ENCODE measurements at regions of chr19 and their contacts with region 1.

Region 1: DNA sequence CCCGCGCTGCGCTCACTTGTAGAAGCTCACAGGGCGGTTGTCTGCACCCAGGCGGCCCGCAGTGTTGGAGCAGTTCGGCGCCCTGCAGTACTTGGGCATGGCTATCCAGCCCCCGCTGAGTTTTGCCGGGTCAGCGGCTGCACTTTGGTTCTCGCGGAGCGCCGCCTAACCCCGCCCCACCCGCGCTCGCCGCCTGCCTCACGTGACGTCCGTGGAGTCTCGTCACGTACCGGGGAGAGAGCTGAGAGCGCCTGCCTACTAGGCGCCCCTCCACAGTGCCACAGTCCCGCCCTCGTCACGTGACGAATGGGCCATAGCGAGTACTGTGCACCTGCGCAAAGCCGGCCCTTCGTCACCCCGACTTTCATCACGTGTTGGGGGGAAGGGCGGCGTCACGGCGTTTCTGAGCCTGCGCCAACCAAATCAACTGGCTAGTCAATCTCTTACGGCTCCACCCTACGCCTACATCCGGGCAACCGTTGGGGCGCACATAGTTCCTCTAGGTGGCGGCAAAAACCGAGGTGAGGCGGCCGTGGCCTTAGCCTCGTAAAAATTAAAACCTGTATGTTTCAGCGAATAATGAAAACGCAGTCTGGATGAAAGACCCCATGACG is at the start of gene THAP8:
- DNase-seq: peak; percentile 99 to 100 (median 100)
- ATAC-seq: peak; percentile 84
- H3K4me3 ChIP-seq: peak within 1 kb of the TSS; percentile 82
- H3K4me3 Mint-ChIP-seq: peak within 1 kb of the TSS; percentile 97
- H3K27ac ChIP-seq: peak within 1 kb of the TSS; percentile 92 to 96
- H3K27ac Mint-ChIP-seq: peak within 1 kb of the TSS; percentile 100
- H3K4me1 ChIP-seq: peaks cover 24% of the 10 kb centered on the region
- H3K4me1 Mint-ChIP-seq: peaks cover 37% of the 10 kb centered on the region
- H3K27me3 ChIP-seq: no peaks in the 10 kb centered on the region
- H3K27me3 Mint-ChIP-seq: no peaks in the 10 kb centered on the region
- CTCF ChIP-seq: peak; percentile 76
- total RNA-seq, gene THAP8: 0.38 to 0.53 TPM

Region 2: DNA sequence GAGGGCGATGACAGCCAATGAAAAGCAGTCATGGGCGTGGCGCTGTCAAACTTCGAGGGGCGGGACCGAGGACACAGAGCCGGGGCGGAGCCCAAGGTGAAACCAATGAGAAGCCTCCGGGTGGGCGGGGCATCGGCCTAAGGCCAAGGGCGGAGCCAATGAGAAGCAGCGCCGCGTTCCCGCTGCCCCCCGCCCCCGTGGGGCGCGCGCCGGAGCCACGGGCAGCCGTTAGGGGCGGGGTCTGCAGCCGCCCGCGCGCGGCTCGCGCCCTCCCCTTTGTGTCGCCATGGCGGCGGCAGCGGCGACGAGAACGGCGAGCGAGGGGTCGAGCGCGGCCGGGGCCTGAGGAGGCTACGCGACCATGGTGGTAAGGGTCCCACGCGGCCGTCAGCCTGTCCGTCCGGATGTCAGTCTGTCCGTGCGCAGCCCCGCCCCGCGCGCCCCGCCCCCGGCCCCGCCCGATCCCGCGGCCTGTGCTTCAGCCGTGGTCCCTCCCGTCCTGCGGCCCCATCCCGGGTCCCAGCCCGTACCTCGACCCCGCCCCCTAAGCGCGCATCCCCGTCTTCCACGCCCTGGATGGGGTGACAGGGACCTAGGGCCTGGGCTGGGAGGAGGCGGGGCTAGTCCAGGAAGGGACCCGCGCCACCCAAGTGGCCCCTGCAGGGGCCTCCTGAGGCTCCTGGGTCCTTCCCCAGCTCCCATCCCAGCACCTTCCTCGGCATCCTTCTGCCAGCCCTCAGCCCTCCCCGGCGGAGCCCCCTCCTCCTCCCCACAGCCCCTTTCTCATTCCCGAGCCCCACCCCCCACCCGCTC is 278.7 kb before region 1 on chr19 and contains the start of gene ARHGAP33:
- CTCF ChIA-PET with region 1: no interaction called
- POLR2A ChIA-PET with region 1: no interaction called
- intact Hi-C with region 1: loop called in 1 of 2 experiments (anchors 5 kb)
- DNase-seq: peak; percentile 96 to 100 (median 98)
- ATAC-seq: peak; percentile 98
- H3K4me3 ChIP-seq: peak within 1 kb of the TSS; percentile 69
- H3K4me3 Mint-ChIP-seq: peak within 1 kb of the TSS; percentile 90
- H3K27ac ChIP-seq: no peak within 1 kb of the TSS
- H3K27ac Mint-ChIP-seq: no peak within 1 kb of the TSS
- H3K4me1 ChIP-seq: peaks cover 21% of the 10 kb centered on the region
- H3K4me1 Mint-ChIP-seq: peaks cover 24% of the 10 kb centered on the region
- H3K27me3 ChIP-seq: no peaks in the 10 kb centered on the region
- H3K27me3 Mint-ChIP-seq: no peaks in the 10 kb centered on the region
- CTCF ChIP-seq: no peak
- total RNA-seq, gene ARHGAP33: 16.4 to 19.5 TPM

Region 3: GRCh38 chr19:35963514-35963913 is 90.7 kb before region 1 on chr19:
- CTCF ChIA-PET with region 1: interaction called, 3 read pairs
- POLR2A ChIA-PET with region 1: interaction called, 9 read pairs
- intact Hi-C with region 1: loop called (anchors 1 to 5 kb)
- DNase-seq: peak in 9 of 14 experiments; percentile 21 to 67 (median 33)
- ATAC-seq: no peak
- H3K4me3 ChIP-seq: no peak overlapping the region
- H3K4me3 Mint-ChIP-seq: no peak overlapping the region
- H3K27ac ChIP-seq: no peak overlapping the region
- H3K27ac Mint-ChIP-seq: no peak overlapping the region
- H3K4me1 ChIP-seq: peaks cover 27% of the 10 kb centered on the region
- H3K4me1 Mint-ChIP-seq: peaks cover 12% of the 10 kb centered on the region
- H3K27me3 ChIP-seq: no peaks in the 10 kb centered on the region
- H3K27me3 Mint-ChIP-seq: peaks cover 9% of the 10 kb centered on the region
- CTCF ChIP-seq: no peak

Region 4: DNA sequence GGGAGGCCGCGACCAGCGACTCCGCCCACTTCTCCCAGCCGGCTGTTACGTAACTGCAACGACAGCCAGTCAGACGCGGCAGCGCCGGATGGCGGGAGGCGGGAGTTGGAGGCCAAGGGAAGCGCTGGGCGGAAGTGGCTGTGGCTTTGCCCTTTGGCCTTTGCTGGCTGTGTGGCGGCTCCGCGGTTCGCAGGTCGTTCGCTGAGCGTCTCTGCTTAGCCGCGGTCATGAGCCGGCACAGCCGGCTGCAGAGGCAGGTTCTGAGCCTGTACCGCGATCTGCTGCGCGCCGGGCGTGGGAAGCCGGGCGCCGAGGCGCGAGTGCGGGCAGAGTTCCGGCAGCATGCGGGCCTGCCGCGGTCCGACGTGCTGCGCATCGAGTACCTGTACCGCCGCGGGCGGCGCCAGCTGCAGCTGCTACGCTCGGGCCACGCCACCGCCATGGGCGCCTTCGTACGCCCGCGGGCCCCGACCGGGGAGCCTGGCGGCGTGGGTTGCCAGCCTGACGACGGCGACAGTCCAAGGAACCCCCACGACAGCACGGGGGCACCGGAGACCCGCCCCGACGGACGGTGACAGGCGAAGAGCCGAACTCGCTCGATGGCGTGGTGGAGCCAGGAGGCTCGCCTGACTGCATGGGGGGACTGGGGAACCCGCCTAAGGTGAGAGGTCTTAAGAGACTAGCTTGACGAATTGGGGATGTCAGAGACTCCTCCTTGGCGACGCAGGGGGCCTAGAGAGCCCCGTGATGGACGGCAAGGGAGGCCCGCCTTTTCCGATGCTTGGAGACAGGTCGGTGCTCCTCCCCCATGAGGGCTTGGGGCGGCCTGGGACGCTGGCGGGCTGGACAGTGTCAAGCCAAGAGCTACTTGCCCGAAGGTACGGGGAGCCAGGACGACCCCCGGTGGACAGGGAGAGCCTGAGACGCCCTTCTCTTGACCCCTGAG is 58.9 kb before region 1 on chr19 and contains the start of gene SDHAF1:
- CTCF ChIA-PET with region 1: no interaction called
- POLR2A ChIA-PET with region 1: no interaction called
- intact Hi-C with region 1: loop called (anchors 2 to 5 kb)
- DNase-seq: peak; percentile 81 to 96 (median 91)
- ATAC-seq: peak; percentile 90
- H3K4me3 ChIP-seq: peak within 1 kb of the TSS; percentile 83
- H3K4me3 Mint-ChIP-seq: peak within 1 kb of the TSS; percentile 95
- H3K27ac ChIP-seq: peak within 1 kb of the TSS; percentile 56 to 63
- H3K27ac Mint-ChIP-seq: peak within 1 kb of the TSS; percentile 83
- H3K4me1 ChIP-seq: peaks cover 45% of the 10 kb centered on the region
- H3K4me1 Mint-ChIP-seq: peaks cover 41% of the 10 kb centered on the region
- H3K27me3 ChIP-seq: no peaks in the 10 kb centered on the region
- H3K27me3 Mint-ChIP-seq: no peaks in the 10 kb centered on the region
- CTCF ChIP-seq: no peak
- total RNA-seq, gene SDHAF1: 4.3 to 5.4 TPM

Region 5: DNA sequence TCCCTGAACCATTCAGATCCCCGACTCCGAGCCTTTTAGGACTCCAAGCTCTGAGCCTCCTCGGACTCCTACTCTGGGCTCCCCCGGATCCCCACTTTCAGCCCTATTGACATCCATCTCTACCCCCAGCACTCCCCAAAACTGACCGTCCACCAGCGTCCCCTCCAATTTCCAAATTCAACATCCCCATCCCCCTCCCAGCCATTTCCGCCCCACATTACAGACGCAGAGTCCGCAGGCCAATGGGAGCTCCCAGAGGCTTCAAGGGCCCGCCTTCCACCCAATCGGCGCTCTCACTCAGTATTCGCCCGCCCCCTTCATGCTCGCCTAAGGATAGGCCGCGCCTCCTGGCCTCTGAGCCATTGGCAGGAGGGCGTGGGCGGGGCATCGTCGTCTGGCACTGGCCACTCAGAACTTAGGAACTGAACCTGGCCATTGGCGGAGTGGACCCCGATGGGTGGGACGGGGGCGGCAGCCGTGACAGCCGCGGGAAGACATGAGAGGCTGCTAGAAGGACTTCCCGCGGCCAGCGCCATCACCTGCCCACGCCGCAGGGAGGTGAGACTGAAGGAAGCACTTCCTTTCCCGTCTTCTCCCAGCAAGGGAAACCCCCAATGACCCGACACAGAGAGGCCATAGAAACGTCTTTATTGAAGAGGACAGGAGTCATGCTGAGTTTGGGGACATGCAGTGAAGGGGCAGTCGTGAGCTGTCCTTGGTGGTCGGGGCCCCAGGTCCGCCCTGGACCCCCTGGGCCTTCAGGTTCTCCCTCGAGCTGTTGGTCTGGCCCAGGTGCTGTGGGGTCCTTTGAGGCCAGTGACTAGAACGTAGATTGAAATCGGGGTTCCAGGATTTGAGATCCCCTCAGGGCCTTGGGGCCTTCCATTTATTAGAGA is 39.9 kb before region 1 on chr19 and contains the start of gene ALKBH6:
- CTCF ChIA-PET with region 1: interaction called, 5 read pairs
- POLR2A ChIA-PET with region 1: interaction called, 12 read pairs
- intact Hi-C with region 1: loop called (anchors 1 kb)
- DNase-seq: peak; percentile 97 to 100 (median 99)
- ATAC-seq: peak; percentile 98
- H3K4me3 ChIP-seq: peak within 1 kb of the TSS; percentile 88
- H3K4me3 Mint-ChIP-seq: peak within 1 kb of the TSS; percentile 99
- H3K27ac ChIP-seq: peak within 1 kb of the TSS; percentile 75 to 89
- H3K27ac Mint-ChIP-seq: peak within 1 kb of the TSS; percentile 94
- H3K4me1 ChIP-seq: peaks cover 32% of the 10 kb centered on the region
- H3K4me1 Mint-ChIP-seq: peaks cover 46% of the 10 kb centered on the region
- H3K27me3 ChIP-seq: no peaks in the 10 kb centered on the region
- H3K27me3 Mint-ChIP-seq: no peaks in the 10 kb centered on the region
- CTCF ChIP-seq: no peak
- total RNA-seq, gene ALKBH6: 38.1 to 41.8 TPM

Region 6: GRCh38 chr19:36139473-36140303 is 85.5 kb after region 1 on chr19 and contains the start of gene CAPNS1:
- CTCF ChIA-PET with region 1: no interaction called
- POLR2A ChIA-PET with region 1: no interaction called
- intact Hi-C with region 1: loop called (anchors 1 to 2 kb)
- DNase-seq: peak; percentile 82 to 95 (median 88)
- ATAC-seq: peak; percentile 63
- H3K4me3 ChIP-seq: peak within 1 kb of the TSS; percentile 97
- H3K4me3 Mint-ChIP-seq: peak within 1 kb of the TSS; percentile 89
- H3K27ac ChIP-seq: peak within 1 kb of the TSS; percentile 76 to 80
- H3K27ac Mint-ChIP-seq: peak within 1 kb of the TSS; percentile 60
- H3K4me1 ChIP-seq: peaks cover 25% of the 10 kb centered on the region
- H3K4me1 Mint-ChIP-seq: peaks cover 22% of the 10 kb centered on the region
- H3K27me3 ChIP-seq: no peaks in the 10 kb centered on the region
- H3K27me3 Mint-ChIP-seq: no peaks in the 10 kb centered on the region
- CTCF ChIP-seq: no peak
- total RNA-seq, gene CAPNS1: 167 to 177 TPM